ENCODE measurements at regions of chr3 and their contacts with region 1.

Region 1: DNA sequence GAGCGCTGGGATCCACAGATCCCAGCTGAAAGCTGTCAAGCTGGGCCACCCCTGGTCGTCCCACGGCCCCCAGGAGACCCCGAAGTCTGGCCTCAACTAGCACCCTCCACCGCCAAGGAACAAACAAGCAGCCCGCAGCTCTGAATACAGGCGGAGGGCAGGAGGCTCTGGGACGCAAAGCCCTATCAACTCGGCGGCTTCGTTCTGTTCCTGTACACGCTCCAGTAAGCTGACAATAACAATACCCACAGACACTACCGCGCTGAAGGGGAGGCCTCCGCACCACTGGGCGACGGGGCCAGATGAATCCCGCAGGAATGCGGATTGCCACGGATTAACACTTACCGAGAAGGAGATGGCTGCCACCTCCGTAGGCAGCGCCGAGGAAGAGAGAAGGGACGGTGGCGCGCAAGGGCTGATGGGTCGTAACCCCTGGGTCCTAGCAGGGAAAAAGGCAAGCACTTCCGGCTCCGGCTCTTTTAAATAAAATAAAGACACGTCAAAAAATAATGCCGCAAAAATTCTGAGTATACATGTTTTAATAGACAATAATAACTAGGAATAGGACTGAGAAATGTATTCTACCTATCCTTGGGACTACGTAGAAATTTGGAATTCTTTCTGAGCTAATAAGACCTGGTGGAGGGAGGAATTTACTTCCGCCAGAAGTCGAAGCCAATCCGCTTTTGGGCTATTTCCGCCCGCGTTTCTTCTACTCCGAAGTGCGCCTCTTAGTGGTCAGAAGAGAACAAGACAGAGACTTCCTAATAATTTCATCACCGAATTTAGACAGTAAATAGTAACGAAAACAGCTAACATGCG is at the start of gene RPL32:
- DNase-seq: peak; percentile 78
- H3K4me3 Mint-ChIP-seq: peak within 1 kb of the TSS; percentile 97
- H3K27ac Mint-ChIP-seq: peak within 1 kb of the TSS; percentile 99
- H3K4me1 Mint-ChIP-seq: peaks cover 39% of the 10 kb centered on the region
- H3K27me3 Mint-ChIP-seq: peaks cover 2% of the 10 kb centered on the region
- total RNA-seq, gene RPL32: 1,952 and 1,970 TPM in 2 replicates

Region 2: DNA sequence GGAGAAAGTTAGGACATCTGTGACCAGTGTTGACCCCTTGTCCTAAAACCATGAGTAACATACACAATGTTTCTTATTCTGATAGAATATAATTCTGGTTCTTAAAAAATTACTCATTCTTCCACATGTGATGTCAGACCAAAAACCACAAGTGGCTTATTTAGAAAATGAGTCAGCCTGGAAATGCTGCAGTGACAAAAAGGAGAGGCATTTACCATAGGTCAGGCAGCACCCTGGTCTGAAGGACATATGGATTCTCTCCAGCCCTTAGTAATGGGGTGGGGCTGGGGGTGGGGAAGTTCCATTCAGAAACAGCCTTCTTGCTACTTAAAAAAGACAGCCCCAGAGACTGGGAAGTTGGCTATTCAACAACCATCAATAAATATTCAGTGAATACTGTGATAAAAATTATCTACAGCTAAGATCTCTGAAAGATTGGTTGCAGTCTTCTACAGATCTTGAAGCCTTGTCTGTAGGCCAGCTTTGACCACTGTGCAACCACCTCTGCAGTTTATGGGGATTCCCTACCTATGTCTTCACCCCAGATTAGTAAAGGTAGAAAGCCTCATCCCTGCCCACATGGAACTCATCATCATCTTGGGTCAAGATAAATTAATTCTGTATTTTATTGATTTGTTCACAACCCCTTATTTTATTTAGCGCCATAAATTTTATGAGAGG is 647.7 kb before region 1 on chr3:
- intact Hi-C with region 1: loop called (anchors 1 kb)
- DNase-seq: no peak
- H3K4me3 Mint-ChIP-seq: peak overlapping the region; percentile 52
- H3K27ac Mint-ChIP-seq: peak overlapping the region; percentile 93
- H3K4me1 Mint-ChIP-seq: peaks cover 77% of the 10 kb centered on the region
- H3K27me3 Mint-ChIP-seq: no peaks in the 10 kb centered on the region

Region 3: GRCh38 chr3:12706504-12707253 is 134.7 kb before region 1 on chr3:
- intact Hi-C with region 1: loop called (anchors 1 kb)
- DNase-seq: peak; percentile 53
- H3K4me3 Mint-ChIP-seq: no peak overlapping the region
- H3K27ac Mint-ChIP-seq: no peak overlapping the region
- H3K4me1 Mint-ChIP-seq: no peaks in the 10 kb centered on the region
- H3K27me3 Mint-ChIP-seq: peaks cover 8% of the 10 kb centered on the region

Region 4: DNA sequence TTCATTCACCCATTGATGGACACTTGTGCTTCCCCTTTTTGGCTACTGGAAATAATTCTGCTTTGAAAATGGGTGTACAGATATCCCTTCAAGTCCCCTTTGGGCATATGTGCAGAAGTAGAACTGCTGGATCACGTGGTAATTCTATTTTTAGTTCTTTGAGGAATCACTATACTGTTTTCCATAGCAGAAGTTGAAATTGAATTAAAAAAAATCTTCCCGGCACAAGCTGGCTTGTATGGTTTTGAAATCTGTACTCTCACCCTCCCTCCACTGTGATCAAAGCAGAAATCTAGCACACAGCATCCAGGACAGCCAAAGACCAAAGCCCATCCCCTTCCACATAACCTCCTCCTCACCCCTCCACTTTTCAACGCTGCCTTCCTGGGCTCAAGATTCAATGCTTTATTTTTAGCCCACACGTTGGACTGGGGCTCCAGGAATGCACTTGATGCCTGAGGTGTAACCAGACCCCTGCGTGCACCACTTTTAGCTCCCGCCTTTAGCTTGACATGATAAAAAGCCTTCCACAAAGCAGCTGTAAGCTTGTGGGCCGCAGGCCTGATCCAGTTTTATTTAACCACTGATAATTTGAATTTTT is 112.2 kb before region 1 on chr3:
- intact Hi-C with region 1: no loop called
- DNase-seq: no peak
- H3K4me3 Mint-ChIP-seq: no peak overlapping the region
- H3K27ac Mint-ChIP-seq: no peak overlapping the region
- H3K4me1 Mint-ChIP-seq: no peaks in the 10 kb centered on the region
- H3K27me3 Mint-ChIP-seq: peaks cover 5% of the 10 kb centered on the region

Region 5: GRCh38 chr3:12868039-12869034 is 27.0 kb after region 1 on chr3:
- intact Hi-C with region 1: loop called (anchors 1 kb)
- DNase-seq: peak; percentile 43
- H3K4me3 Mint-ChIP-seq: peak overlapping the region; percentile 65
- H3K27ac Mint-ChIP-seq: no peak overlapping the region
- H3K4me1 Mint-ChIP-seq: peaks cover 17% of the 10 kb centered on the region
- H3K27me3 Mint-ChIP-seq: peaks cover 29% of the 10 kb centered on the region

Region 6: DNA sequence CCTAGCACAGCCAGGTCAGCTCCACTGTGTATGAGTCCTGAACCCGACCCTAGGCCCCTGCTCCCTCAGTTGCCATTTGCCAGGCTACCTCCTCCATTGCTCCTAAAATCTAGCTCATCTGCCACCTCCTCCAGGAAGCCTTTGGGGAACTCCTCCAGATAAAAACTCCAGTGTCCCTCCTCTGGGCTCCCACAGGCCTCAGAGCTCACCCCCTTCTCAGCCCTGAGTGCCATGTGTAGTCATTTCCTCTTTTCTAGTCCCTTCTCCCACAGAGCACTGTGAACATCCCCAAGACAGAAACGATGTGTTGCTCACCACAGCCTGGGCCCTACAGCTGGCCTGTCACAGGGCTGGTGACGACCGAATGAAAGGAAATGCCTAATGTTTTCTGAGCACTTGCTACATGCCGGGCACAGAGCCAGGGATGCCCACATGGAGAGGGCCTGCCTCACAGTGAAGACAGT is 170.9 kb after region 1 on chr3:
- intact Hi-C with region 1: loop called (anchors 1 kb)
- DNase-seq: peak; percentile 43
- H3K4me3 Mint-ChIP-seq: peak overlapping the region; percentile 80
- H3K27ac Mint-ChIP-seq: peak overlapping the region; percentile 99
- H3K4me1 Mint-ChIP-seq: peaks cover 85% of the 10 kb centered on the region
- H3K27me3 Mint-ChIP-seq: no peaks in the 10 kb centered on the region

Region 7: GRCh38 chr3:13045904-13046568 is 204.7 kb after region 1 on chr3:
- intact Hi-C with region 1: no loop called
- DNase-seq: no peak
- H3K4me3 Mint-ChIP-seq: no peak overlapping the region
- H3K27ac Mint-ChIP-seq: no peak overlapping the region
- H3K4me1 Mint-ChIP-seq: peaks cover 14% of the 10 kb centered on the region
- H3K27me3 Mint-ChIP-seq: peaks cover 1% of the 10 kb centered on the region

Measured in activated T-helper 1 cell treated with anti-CD3 and anti-CD28 coated beads, Interleukin-12 subunit alpha, Interleukin-12 subunit beta, Interleukin-2, Interleukin-4 antibody, amounts not matched to agents 30 ng/mL and 10 ng/mL and 1 ng/mL, durations not matched to agents 14 hours and 24 hours and 36 hours (primary cell).